CD4-positive, alpha-beta memory T cell (primary cell): ENCODE measurements at regions of chr17 and their contacts with region 1.

Region 1: DNA sequence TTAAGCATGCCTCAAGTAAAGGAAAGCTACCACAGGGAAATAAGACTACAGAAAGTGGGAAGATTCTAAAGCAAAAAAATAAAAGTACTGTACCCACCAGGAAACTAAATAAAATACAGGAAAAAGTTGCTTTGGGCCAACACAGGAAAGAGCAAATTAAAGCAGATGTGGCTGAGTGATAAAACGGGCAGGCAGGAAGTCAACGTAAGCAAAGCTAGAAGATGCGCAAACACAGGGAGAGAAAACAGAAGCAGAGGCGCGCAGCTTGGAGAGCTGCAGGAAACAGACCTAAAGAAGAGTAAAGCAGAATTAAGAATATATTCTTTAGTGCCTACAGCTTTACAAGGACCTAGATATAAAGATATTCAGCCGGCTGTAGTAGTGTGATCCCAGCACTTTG is 21.7 kb downstream of the USP36 start:
- DNase-seq: peak; percentile 82 to 87 (median 84)
- H3K4me3 ChIP-seq: peak overlapping the region in 1 of 2 donors; percentile 35
- H3K4me3 Mint-ChIP-seq: peak overlapping the region; percentile 56 to 83 (median 76)
- H3K27ac ChIP-seq: peak overlapping the region; percentile 83
- H3K27ac Mint-ChIP-seq: peak overlapping the region; percentile 86 to 100 (median 96)
- H3K4me1 ChIP-seq: peaks cover 59% of the 10 kb centered on the region
- H3K4me1 Mint-ChIP-seq: peaks cover 33 to 81% (median 50%) of the 10 kb centered on the region in 4 donors
- H3K27me3 ChIP-seq: no peaks in the 10 kb centered on the region
- H3K27me3 Mint-ChIP-seq: no peaks in the 10 kb centered on the region

Region 2: GRCh38 chr17:78716814-78717393 is 102.0 kb before region 1 on chr17:
- CTCF ChIA-PET with region 1: no interaction called
- POLR2A ChIA-PET with region 1: interaction called, 10 read pairs
- intact Hi-C with region 1: no loop called
- DNase-seq: peak in 2 of 5 donors; percentile 29 to 55
- H3K4me3 ChIP-seq: no peak overlapping the region
- H3K4me3 Mint-ChIP-seq: peak overlapping the region; percentile 56 to 87 (median 76)
- H3K27ac ChIP-seq: no peak overlapping the region
- H3K27ac Mint-ChIP-seq: peak overlapping the region; percentile 38 to 92 (median 89)
- H3K4me1 ChIP-seq: peaks cover 98% of the 10 kb centered on the region
- H3K4me1 Mint-ChIP-seq: peaks cover 73 to 95% (median 85%) of the 10 kb centered on the region in 4 donors
- H3K27me3 ChIP-seq: no peaks in the 10 kb centered on the region
- H3K27me3 Mint-ChIP-seq: no peaks in the 10 kb centered on the region

Region 3: GRCh38 chr17:78736526-78737079 is 82.3 kb before region 1 on chr17:
- CTCF ChIA-PET with region 1: interaction called, 5 read pairs
- POLR2A ChIA-PET with region 1: interaction called, 11 read pairs
- intact Hi-C with region 1: no loop called
- DNase-seq: peak; percentile 69 to 84 (median 77)
- H3K4me3 ChIP-seq: peak overlapping the region; percentile 64 to 71
- H3K4me3 Mint-ChIP-seq: peak overlapping the region; percentile 91 to 98 (median 98)
- H3K27ac ChIP-seq: peak overlapping the region; percentile 82
- H3K27ac Mint-ChIP-seq: peak overlapping the region; percentile 85 to 98 (median 95)
- H3K4me1 ChIP-seq: peaks cover 89% of the 10 kb centered on the region
- H3K4me1 Mint-ChIP-seq: peaks cover 69 to 94% (median 83%) of the 10 kb centered on the region in 4 donors
- H3K27me3 ChIP-seq: no peaks in the 10 kb centered on the region
- H3K27me3 Mint-ChIP-seq: no peaks in the 10 kb centered on the region

Region 4: DNA sequence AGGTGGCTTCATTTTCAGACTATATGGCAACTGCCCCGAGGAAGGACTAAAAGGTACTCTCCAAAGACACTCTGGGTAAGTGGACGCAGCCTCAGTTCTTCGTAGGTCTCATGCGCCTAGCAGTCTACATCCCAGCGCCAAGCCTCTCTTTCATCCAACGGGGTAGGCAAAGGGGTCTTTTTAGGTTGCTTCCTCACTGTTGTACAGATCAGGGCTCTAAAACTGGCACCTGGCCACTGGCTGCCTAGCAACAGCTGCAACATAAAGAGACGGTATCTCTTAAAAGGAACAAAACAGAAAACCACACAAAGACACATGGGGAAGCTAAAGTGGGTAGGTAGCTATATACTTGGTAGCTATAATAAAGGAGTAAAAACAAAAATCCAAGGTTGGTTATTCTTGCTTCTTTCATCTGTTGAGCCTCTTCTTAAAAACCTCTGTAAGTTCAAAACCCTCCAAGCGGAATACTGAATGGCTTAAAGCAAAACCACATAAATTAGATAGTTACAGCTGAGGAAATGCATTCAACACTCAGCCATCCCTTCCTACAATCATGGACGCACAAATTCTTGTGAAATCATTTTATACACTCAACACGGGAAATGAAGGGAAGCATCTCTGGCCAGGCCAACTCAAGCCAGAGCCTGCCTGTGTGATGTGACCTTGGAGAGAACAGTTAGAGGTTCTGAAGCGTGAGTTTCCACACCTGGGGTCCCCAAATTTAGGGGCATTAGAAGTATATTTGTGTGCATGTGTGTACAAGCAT is 59.5 kb before region 1 on chr17:
- CTCF ChIA-PET with region 1: no interaction called
- POLR2A ChIA-PET with region 1: interaction called, 14 read pairs
- intact Hi-C with region 1: no loop called
- DNase-seq: peak; percentile 87 to 95 (median 92)
- H3K4me3 ChIP-seq: peak overlapping the region; percentile 26 to 51
- H3K4me3 Mint-ChIP-seq: peak overlapping the region; percentile 67 to 92 (median 83)
- H3K27ac ChIP-seq: peak overlapping the region; percentile 88
- H3K27ac Mint-ChIP-seq: peak overlapping the region; percentile 91 to 99 (median 98)
- H3K4me1 ChIP-seq: peaks cover 94% of the 10 kb centered on the region
- H3K4me1 Mint-ChIP-seq: peaks cover 56 to 88% (median 61%) of the 10 kb centered on the region in 4 donors
- H3K27me3 ChIP-seq: no peaks in the 10 kb centered on the region
- H3K27me3 Mint-ChIP-seq: no peaks in the 10 kb centered on the region

Region 5: DNA sequence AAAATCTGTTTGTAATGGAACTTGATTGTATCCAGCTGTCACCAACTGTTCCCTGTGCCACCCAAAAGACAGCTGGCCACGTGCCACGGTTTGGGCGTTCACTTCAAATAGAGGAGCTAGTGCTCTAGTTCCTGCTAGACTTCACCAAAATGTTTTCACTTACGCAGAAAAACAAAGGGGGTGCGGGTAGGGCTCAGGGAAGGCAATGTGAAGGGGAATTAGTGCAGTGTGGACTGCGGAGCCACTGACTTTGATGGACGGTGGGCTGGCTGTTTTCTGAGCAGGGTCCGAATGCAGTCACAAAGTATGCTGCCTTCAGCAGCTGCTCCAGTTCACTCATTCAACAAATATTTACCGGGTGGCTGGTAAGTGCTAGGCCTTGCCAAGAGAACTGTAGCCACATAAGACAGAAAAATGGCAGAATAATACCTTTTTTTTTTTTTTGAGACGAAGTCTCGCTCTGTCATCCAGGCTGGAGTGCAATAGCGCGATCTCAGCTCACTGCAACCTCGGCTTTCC is 29.2 kb before region 1 on chr17:
- CTCF ChIA-PET with region 1: interaction called, 12 read pairs
- POLR2A ChIA-PET with region 1: interaction called, 99 read pairs
- intact Hi-C with region 1: no loop called
- DNase-seq: peak; percentile 76 to 85 (median 78)
- H3K4me3 ChIP-seq: no peak overlapping the region
- H3K4me3 Mint-ChIP-seq: peak overlapping the region in 7 of 8 donors; percentile 37 to 84 (median 70)
- H3K27ac ChIP-seq: peak overlapping the region; percentile 48
- H3K27ac Mint-ChIP-seq: peak overlapping the region; percentile 81 to 97 (median 95)
- H3K4me1 ChIP-seq: peaks cover 74% of the 10 kb centered on the region
- H3K4me1 Mint-ChIP-seq: peaks cover 39 to 89% (median 63%) of the 10 kb centered on the region in 4 donors
- H3K27me3 ChIP-seq: no peaks in the 10 kb centered on the region
- H3K27me3 Mint-ChIP-seq: no peaks in the 10 kb centered on the region

Region 6: DNA sequence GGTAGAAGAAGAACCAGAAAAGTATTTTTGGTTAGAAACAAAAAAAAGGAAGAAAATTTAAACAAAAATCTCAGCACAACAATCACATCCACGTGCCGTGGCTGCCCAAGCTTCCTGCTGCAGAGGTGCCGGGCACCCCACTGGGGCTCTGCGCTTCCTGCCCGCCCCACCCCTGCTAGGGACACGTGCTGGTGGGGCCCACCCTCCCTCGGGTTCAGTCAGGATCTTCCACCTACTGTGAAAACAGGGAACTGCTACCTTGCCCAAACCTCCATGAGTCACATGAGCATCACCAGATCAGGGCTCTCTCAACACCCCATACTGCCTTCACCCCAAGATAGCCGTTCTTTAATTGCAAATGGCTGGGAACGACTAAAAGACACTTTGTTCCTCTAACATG is 12.5 kb before region 1 on chr17:
- CTCF ChIA-PET with region 1: interaction called, 5 read pairs
- POLR2A ChIA-PET with region 1: interaction called, 81 read pairs
- intact Hi-C with region 1: loop called (anchors 1 kb)
- DNase-seq: peak in 4 of 5 donors; percentile 21 to 79 (median 64)
- H3K4me3 ChIP-seq: no peak overlapping the region
- H3K4me3 Mint-ChIP-seq: peak overlapping the region; percentile 3 to 83 (median 74)
- H3K27ac ChIP-seq: peak overlapping the region; percentile 57
- H3K27ac Mint-ChIP-seq: peak overlapping the region; percentile 87 to 99 (median 97)
- H3K4me1 ChIP-seq: peaks cover 49% of the 10 kb centered on the region
- H3K4me1 Mint-ChIP-seq: peaks cover 39 to 60% (median 52%) of the 10 kb centered on the region in 4 donors
- H3K27me3 ChIP-seq: no peaks in the 10 kb centered on the region
- H3K27me3 Mint-ChIP-seq: no peaks in the 10 kb centered on the region

Region 7: GRCh38 chr17:78840725-78841611 is 22.0 kb after region 1 on chr17 and contains the start of gene USP36:
- CTCF ChIA-PET with region 1: interaction called, 17 read pairs
- POLR2A ChIA-PET with region 1: interaction called, 27 read pairs
- intact Hi-C with region 1: loop called (anchors 1 kb)
- DNase-seq: peak; percentile 99 to 100 (median 99)
- H3K4me3 ChIP-seq: peak within 1 kb of the TSS; percentile 74 to 89
- H3K4me3 Mint-ChIP-seq: peak within 1 kb of the TSS; percentile 93 to 99 (median 96)
- H3K27ac ChIP-seq: peak within 1 kb of the TSS; percentile 95
- H3K27ac Mint-ChIP-seq: peak within 1 kb of the TSS; percentile 93 to 99 (median 99)
- H3K4me1 ChIP-seq: peaks cover 40% of the 10 kb centered on the region
- H3K4me1 Mint-ChIP-seq: peaks cover 37 to 73% (median 49%) of the 10 kb centered on the region in 4 donors
- H3K27me3 ChIP-seq: no peaks in the 10 kb centered on the region
- H3K27me3 Mint-ChIP-seq: no peaks in the 10 kb centered on the region
- total RNA-seq, gene USP36: 181 to 183 TPM